ENCODE measurements at regions of chr20 and their contacts with region 1.

Region 1: GRCh38 chr20:40868551-40869217 is 159.9 kb upstream of the TOP1 start:
- DNase-seq: peak in 1 of 2 donors; percentile 70
- ATAC-seq: peak; percentile 86
- H3K4me3 ChIP-seq: no peak overlapping the region
- H3K27ac ChIP-seq: peak overlapping the region in 1 of 2 donors; percentile 10
- H3K4me1 ChIP-seq: peaks cover 1 to 7% of the 10 kb centered on the region in 2 donors
- H3K27me3 ChIP-seq: no peaks in the 10 kb centered on the region

Region 2: GRCh38 chr20:40741507-40742106 is 127.1 kb before region 1 on chr20:
- intact Hi-C with region 1: loop called in 1 of 2 experiments (anchors 10 kb)
- DNase-seq: peak in 1 of 2 donors; percentile 71
- ATAC-seq: no peak
- H3K4me3 ChIP-seq: no peak overlapping the region
- H3K27ac ChIP-seq: no peak overlapping the region
- H3K4me1 ChIP-seq: no peaks in the 10 kb centered on the region
- H3K27me3 ChIP-seq: no peaks in the 10 kb centered on the region

Region 3: GRCh38 chr20:40763646-40764295 is 104.9 kb before region 1 on chr20:
- intact Hi-C with region 1: loop called in 1 of 2 experiments (anchors 5 kb)
- DNase-seq: peak; percentile 83 to 92
- ATAC-seq: peak; percentile 64
- H3K4me3 ChIP-seq: no peak overlapping the region
- H3K27ac ChIP-seq: no peak overlapping the region
- H3K4me1 ChIP-seq: peaks cover 0 to 5% of the 10 kb centered on the region in 2 donors
- H3K27me3 ChIP-seq: no peaks in the 10 kb centered on the region